Aorta (tissue), 5 donors: ENCODE measurements at regions of chr2 and their contacts with region 1.

Region 1: DNA sequence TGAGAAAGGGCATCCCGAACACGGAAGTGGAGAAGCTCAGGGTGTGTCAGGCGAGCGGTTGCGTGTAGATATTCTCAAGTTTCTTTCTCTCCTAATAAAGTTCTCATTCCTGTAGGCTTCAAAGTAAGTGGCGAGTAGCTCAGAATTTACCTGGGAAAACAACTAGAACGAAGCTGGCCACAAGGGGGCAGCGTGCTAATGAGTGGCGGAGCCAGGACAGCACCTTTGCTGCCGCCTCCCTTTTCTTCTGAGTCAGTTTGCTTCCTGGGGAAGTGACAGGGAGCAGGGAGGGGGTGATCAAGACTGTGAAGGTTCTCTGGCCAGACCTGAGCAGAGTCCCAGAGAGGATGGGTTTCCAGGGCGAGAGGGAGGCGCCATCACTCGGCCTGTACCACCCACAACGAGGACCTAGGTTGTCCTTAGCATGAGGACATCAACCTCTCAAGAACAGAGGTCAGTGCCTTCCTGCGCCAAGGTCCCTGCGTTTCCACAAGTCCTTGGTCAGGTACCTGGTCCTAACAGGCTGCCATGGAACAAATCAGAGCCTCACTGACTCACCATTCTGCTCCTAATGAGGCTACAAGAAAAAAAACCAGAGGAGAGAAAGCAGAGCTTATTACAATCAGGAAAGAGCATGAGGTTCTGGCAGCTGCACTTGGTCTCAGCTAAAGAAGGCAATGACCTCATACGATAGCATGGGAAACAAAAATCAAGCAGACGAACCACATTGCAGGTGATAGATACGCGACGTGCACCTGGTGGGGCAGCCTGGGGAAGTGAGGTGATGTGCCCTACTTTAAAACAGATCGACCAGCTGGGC is 98.6 kb downstream of the PLB1 start:
- DNase-seq: peak; percentile 92 to 95
- ATAC-seq: peak; percentile 87
- H3K4me3 ChIP-seq: no peak overlapping the region
- H3K27ac ChIP-seq: peak overlapping the region; percentile 72 to 95
- H3K4me1 ChIP-seq: peaks cover 0 to 1% of the 10 kb centered on the region in 2 donors
- H3K27me3 ChIP-seq: no peaks in the 10 kb centered on the region

Region 2: DNA sequence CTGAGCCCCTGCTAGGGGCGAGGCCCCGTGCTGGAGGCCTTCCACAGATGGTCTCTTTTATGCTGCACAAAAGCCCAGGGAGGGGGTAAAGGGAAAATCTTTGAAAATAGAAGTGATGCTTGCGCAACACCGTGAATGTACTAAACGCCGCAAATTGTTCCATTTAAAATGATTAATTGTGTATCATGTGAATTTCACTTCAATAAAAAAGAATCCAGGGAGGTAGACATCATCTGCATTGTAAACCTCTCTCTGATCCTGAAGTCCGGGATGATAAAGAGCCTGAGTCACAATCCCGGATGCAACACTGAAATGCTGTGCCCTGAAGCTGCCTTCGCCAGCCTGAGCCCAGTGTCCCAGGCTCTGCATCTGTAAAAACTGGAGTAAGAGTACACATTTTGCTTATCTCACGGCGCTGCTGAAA is 49.4 kb after region 1 on chr2:
- intact Hi-C with region 1: loop called in 1 of 2 experiments (anchors 5 kb)
- DNase-seq: peak; percentile 46 to 64
- ATAC-seq: peak; percentile 25
- H3K4me3 ChIP-seq: no peak overlapping the region
- H3K27ac ChIP-seq: peak overlapping the region; percentile 90 to 96
- H3K4me1 ChIP-seq: peaks cover 5 to 11% of the 10 kb centered on the region in 2 donors
- H3K27me3 ChIP-seq: no peaks in the 10 kb centered on the region